Right cardiac atrium (tissue), 5 donors: ENCODE measurements at regions of chr2 and their contacts with region 1.

Region 1: GRCh38 chr2:38720613-38721241 is 30.4 kb downstream of the SRSF7 start:
- DNase-seq: peak; percentile 81 to 93 (median 92)
- ATAC-seq: peak; percentile 90 to 93
- H3K4me3 ChIP-seq: no peak overlapping the region
- H3K27ac ChIP-seq: peak overlapping the region; percentile 94
- H3K4me1 ChIP-seq: no peaks in the 10 kb centered on the region
- H3K27me3 ChIP-seq: no peaks in the 10 kb centered on the region

Region 2: GRCh38 chr2:38315707-38316333 is 404.9 kb before region 1 on chr2:
- intact Hi-C with region 1: loop called in 1 of 4 experiments (anchors 10 kb)
- DNase-seq: no peak
- ATAC-seq: peak; percentile 60 to 72
- H3K4me3 ChIP-seq: no peak overlapping the region
- H3K27ac ChIP-seq: no peak overlapping the region
- H3K4me1 ChIP-seq: no peaks in the 10 kb centered on the region
- H3K27me3 ChIP-seq: no peaks in the 10 kb centered on the region

Region 3: GRCh38 chr2:38602732-38603401 is 117.9 kb before region 1 on chr2 and contains the start of gene HNRNPLL:
- intact Hi-C with region 1: loop called in 2 of 4 experiments (anchors 5 kb)
- DNase-seq: peak; percentile 98 to 100 (median 99)
- ATAC-seq: peak; percentile 97
- H3K4me3 ChIP-seq: peak within 1 kb of the TSS; percentile 92
- H3K27ac ChIP-seq: peak within 1 kb of the TSS; percentile 96
- H3K4me1 ChIP-seq: peaks cover 3% of the 10 kb centered on the region
- H3K27me3 ChIP-seq: no peaks in the 10 kb centered on the region
- total RNA-seq, gene HNRNPLL: 33.3 to 38.7 (median 34.9) TPM

Region 4: GRCh38 chr2:38665854-38666555 is 54.7 kb before region 1 on chr2 and contains the start of gene GALM:
- intact Hi-C with region 1: loop called in 1 of 4 experiments (anchors 10 kb)
- DNase-seq: peak; percentile 83 to 93 (median 92)
- ATAC-seq: peak; percentile 96 to 97
- H3K4me3 ChIP-seq: peak within 1 kb of the TSS; percentile 67
- H3K27ac ChIP-seq: peak within 1 kb of the TSS; percentile 86
- H3K4me1 ChIP-seq: no peaks in the 10 kb centered on the region
- H3K27me3 ChIP-seq: no peaks in the 10 kb centered on the region
- total RNA-seq, gene GALM: 11.4 to 23.0 (median 19.8) TPM